ENCODE measurements at regions of chr17 and their contacts with region 1.

Region 1: DNA sequence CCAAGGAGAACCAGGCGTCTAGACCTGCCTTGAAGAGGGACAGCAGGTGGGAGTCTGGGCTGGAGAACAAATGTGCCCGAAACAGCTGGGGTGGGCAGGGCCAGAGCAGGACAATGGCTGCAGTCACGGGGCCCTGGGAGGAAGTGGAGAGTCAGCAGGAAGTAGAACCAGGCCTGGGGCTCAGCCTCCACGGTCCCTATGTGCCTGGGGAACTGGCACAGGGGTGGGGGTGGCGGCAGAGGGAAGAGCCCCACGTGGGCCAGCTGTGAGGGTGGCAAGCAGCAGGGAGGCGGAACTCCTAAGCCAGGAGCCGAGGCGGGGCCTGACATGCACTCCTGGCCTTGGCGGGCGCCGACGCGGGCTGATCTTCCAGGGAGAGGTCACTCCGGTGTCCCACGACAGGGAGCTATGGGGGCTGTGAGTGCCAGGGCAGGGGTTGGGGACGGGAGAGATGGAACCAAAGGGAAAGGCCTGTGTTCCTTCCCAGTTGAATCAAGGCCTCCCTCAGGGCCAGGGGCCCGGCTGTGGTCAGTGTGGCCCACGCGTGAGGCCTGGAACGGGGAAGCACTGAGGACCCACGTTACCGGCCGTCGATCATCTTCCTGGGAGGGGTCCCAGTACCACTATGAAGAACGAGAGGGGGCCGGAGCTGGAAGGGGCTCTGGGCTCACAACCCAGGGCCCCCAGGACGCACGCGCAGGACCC is 42.7 kb downstream of the TIMM22 start:
- DNase-seq: peak; percentile 64 to 67
- ATAC-seq: peak; percentile 45 to 51
- H3K4me3 ChIP-seq: peak overlapping the region in 3 of 4 donors; percentile 20 to 34 (median 29)
- H3K27ac ChIP-seq: peak overlapping the region; percentile 67 to 80 (median 76)
- H3K4me1 ChIP-seq: peaks cover 13 to 32% of the 10 kb centered on the region in 2 donors
- H3K27me3 ChIP-seq: no peaks in the 10 kb centered on the region
- CTCF ChIP-seq: no peak
- POLR2A ChIP-seq: peak; percentile 18 to 20

Region 2: DNA sequence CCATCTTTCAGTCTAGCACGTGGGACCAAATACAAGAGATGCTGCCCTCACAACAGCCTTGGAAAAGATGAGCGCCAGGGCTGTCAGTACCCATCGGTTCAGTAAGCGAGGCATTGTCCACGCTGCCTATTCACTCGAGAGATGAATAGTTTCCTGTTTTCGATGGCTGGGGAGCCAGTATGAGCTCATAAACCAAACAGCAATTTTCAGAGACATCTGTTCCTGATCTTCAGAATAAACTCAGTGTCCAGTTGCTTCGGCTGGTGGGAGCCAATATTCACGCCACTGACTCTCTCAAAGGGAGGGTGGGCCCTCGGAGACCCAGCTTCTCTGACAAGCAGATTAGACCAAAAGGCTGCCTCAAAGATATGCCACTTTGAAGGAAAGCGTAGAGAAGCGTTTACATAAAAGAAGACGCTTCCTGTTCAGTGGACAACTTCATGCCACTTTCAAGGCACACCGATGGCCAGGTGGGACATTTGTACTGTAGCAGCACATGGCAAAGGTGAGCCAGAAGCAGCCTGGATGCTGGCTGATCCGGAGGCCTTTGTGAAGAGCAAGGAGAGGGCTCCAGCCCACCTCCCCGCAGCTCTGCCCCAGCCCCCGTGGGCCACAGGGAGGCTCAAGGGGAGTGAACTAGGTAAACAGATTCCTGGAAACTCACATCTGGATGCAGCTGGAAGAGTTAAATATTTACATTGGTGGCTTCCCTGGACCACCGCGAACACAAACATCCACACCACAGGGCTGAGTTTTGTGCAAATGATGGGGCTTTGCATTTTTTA is 36.7 kb before region 1 on chr17:
- in situ Hi-C with region 1: no loop called
- intact Hi-C with region 1: loop called (anchors 5 kb)
- DNase-seq: no peak
- ATAC-seq: no peak
- H3K4me3 ChIP-seq: no peak overlapping the region
- H3K27ac ChIP-seq: peak overlapping the region; percentile 85 to 94 (median 90)
- H3K4me1 ChIP-seq: peaks cover 77 to 86% of the 10 kb centered on the region in 2 donors
- H3K27me3 ChIP-seq: no peaks in the 10 kb centered on the region
- CTCF ChIP-seq: no peak
- POLR2A ChIP-seq: no peak